ENCODE measurements at regions of chr11 and their contacts with region 1.

Region 1: GRCh38 chr11:27362749-27363575 is at the start of gene CCDC34:
- DNase-seq: peak; percentile 89 to 94 (median 91)
- H3K4me3 ChIP-seq: peak within 1 kb of the TSS; percentile 66
- H3K27ac ChIP-seq: no peak within 1 kb of the TSS
- H3K4me1 ChIP-seq: no peaks in the 10 kb centered on the region
- H3K27me3 ChIP-seq: no peaks in the 10 kb centered on the region
- CTCF ChIP-seq: no peak
- EP300 ChIP-seq: no peak
- POLR2A ChIP-seq: peak; percentile 6
- total RNA-seq, gene CCDC34: 2.5 to 17.5 (median 7.8) TPM

Region 2: GRCh38 chr11:26993965-26994457 is 369.0 kb before region 1 on chr11 and contains the start of gene FIBIN:
- intact Hi-C with region 1: no loop called
- DNase-seq: peak; percentile 34 to 62 (median 52)
- H3K4me3 ChIP-seq: peak within 1 kb of the TSS; percentile 64
- H3K27ac ChIP-seq: peak within 1 kb of the TSS; percentile 2 to 46
- H3K4me1 ChIP-seq: peaks cover 5% of the 10 kb centered on the region
- H3K27me3 ChIP-seq: no peaks in the 10 kb centered on the region
- CTCF ChIP-seq: no peak
- EP300 ChIP-seq: no peak
- POLR2A ChIP-seq: peak; percentile 38
- total RNA-seq, gene FIBIN: 5.2 to 28.4 (median 15.9) TPM

Region 3: DNA sequence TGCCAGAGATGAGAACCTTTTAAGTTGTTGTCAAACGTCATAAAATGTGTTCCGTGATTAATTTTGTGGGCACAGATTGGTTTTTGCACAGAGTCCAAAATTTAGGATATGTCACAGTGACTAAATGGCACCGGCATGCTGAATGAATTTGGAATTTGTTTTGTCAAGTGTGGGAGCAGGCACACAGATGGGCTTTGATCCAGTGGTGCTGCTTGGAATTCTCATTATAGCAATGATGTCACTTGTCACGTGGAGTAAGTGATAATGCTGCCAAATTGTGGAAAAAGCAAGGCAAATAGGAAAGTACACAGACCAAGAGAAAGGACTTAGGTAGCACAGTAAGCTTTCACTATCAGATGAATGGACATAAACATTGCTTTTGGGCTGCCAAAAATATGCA is 151.6 kb after region 1 on chr11:
- intact Hi-C with region 1: loop called in 1 of 4 experiments (anchors 10 kb)
- DNase-seq: no peak
- H3K4me3 ChIP-seq: no peak overlapping the region
- H3K27ac ChIP-seq: no peak overlapping the region
- H3K4me1 ChIP-seq: no peaks in the 10 kb centered on the region
- H3K27me3 ChIP-seq: no peaks in the 10 kb centered on the region
- CTCF ChIP-seq: no peak
- EP300 ChIP-seq: no peak
- POLR2A ChIP-seq: no peak

Measured in ovary (tissue), 10 donors.